ENCODE measurements at regions of chr18 and their contacts with region 1.

Region 1: GRCh38 chr18:74353169-74353775 is 37.6 kb downstream of the C18orf63 start:
- DNase-seq: peak; percentile 27 to 83 (median 57)
- ATAC-seq: peak; percentile 92
- H3K4me3 ChIP-seq: no peak overlapping the region
- H3K4me3 Mint-ChIP-seq: no peak overlapping the region
- H3K27ac ChIP-seq: no peak overlapping the region
- H3K27ac Mint-ChIP-seq: no peak overlapping the region
- H3K4me1 ChIP-seq: peaks cover 4% of the 10 kb centered on the region
- H3K4me1 Mint-ChIP-seq: peaks cover 11% of the 10 kb centered on the region
- H3K27me3 ChIP-seq: no peaks in the 10 kb centered on the region
- H3K27me3 Mint-ChIP-seq: no peaks in the 10 kb centered on the region
- CTCF ChIP-seq: peak; percentile 77

Region 2: GRCh38 chr18:73842795-73843394 is 510.4 kb before region 1 on chr18:
- CTCF ChIA-PET with region 1: no interaction called
- POLR2A ChIA-PET with region 1: no interaction called
- intact Hi-C with region 1: no loop called
- DNase-seq: peak in 7 of 9 experiments; percentile 7 to 56 (median 30)
- ATAC-seq: peak; percentile 49
- H3K4me3 ChIP-seq: no peak overlapping the region
- H3K4me3 Mint-ChIP-seq: peak overlapping the region; percentile 78
- H3K27ac ChIP-seq: no peak overlapping the region
- H3K27ac Mint-ChIP-seq: no peak overlapping the region
- H3K4me1 ChIP-seq: no peaks in the 10 kb centered on the region
- H3K4me1 Mint-ChIP-seq: peaks cover 7% of the 10 kb centered on the region
- H3K27me3 ChIP-seq: no peaks in the 10 kb centered on the region
- H3K27me3 Mint-ChIP-seq: peaks cover 2% of the 10 kb centered on the region
- CTCF ChIP-seq: peak; percentile 94

Region 3: DNA sequence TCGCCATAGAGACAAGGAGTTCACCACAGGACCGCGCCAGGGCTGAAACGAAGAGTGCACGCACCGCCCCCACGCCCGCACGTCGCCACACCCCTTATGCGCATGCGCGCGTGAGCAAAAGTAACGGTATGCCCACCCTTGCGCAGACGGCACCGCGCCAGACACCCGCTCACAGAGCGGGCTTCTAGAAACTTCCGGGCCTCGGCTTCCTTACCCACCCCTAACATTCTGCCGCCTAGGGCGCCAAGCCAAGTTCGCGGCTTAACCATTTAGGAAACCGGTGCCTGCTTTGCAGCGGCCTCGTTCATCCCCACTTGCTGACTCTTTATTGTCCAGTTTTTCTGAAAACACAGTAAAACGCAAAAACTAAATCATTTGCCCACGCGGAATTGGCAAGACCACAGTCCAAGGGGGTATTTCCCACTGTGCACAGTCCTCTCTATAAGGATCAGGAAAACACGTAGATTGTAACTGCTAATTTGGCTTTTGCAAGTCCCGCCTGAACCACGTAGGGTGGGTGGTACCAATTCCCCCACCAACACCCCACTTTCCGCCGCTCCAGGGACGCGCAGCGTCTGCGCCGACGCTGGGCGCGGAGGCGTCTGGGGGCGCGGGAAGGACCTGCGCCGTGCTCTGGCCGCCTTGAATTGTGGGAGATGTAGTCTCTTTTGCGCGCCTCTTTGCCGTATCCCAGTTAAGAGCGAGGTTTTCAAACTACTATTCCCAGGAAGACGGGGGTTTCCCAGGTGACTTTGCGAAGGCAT is 205.3 kb before region 1 on chr18 and contains the starts of genes FBXO15 and TIMM21:
- CTCF ChIA-PET with region 1: no interaction called
- POLR2A ChIA-PET with region 1: no interaction called
- intact Hi-C with region 1: loop called in 1 of 2 experiments (anchors 5 kb)
- DNase-seq: peak; percentile 89 to 99 (median 96)
- ATAC-seq: peak; percentile 83
- H3K4me3 ChIP-seq: peak within 1 kb of the TSS; percentile 84 to 91
- H3K4me3 Mint-ChIP-seq: peak within 1 kb of the TSS; percentile 90
- H3K27ac ChIP-seq: peak within 1 kb of the TSS; percentile 92 to 99
- H3K27ac Mint-ChIP-seq: peak within 1 kb of the TSS; percentile 92
- H3K4me1 ChIP-seq: peaks cover 21% of the 10 kb centered on the region
- H3K4me1 Mint-ChIP-seq: peaks cover 53% of the 10 kb centered on the region
- H3K27me3 ChIP-seq: no peaks in the 10 kb centered on the region
- H3K27me3 Mint-ChIP-seq: no peaks in the 10 kb centered on the region
- CTCF ChIP-seq: no peak
- total RNA-seq, gene FBXO15: 1.0 to 1.3 TPM
- total RNA-seq, gene TIMM21: 20.2 to 20.8 TPM

Region 4: DNA sequence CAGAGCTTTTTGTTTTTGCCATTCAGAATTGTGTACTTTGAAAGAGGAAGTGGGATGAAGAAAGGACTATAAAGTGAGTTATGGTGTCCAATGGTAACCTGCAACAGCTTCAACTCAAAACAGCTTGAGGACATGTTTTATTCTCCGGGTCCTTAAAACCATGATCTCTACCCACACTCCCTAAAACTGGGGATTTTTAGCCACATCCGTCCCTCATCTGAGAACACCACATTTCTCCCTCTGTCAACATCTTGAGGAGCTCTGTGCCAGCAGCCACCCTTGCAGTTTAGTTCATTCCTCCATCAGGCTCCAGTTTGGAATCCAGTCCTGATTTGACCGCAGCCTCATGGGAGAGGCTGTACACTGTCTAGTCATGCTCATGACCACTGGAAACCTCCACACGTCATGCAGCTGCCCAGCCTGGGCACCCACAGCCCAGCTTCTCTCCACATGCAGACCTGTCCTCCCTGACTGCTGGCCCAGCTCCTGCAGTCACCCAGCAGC is 25.0 kb after region 1 on chr18:
- CTCF ChIA-PET with region 1: interaction called, 24 read pairs
- POLR2A ChIA-PET with region 1: interaction called, 7 read pairs
- intact Hi-C with region 1: loop called in 1 of 2 experiments (anchors 1 kb)
- DNase-seq: peak in 5 of 9 experiments; percentile 18 to 80 (median 51)
- ATAC-seq: peak; percentile 35
- H3K4me3 ChIP-seq: peak overlapping the region in 1 of 2 experiments; percentile 41
- H3K4me3 Mint-ChIP-seq: peak overlapping the region; percentile 64
- H3K27ac ChIP-seq: peak overlapping the region in 1 of 2 experiments; percentile 56
- H3K27ac Mint-ChIP-seq: peak overlapping the region; percentile 88
- H3K4me1 ChIP-seq: peaks cover 52% of the 10 kb centered on the region
- H3K4me1 Mint-ChIP-seq: peaks cover 58% of the 10 kb centered on the region
- H3K27me3 ChIP-seq: no peaks in the 10 kb centered on the region
- H3K27me3 Mint-ChIP-seq: no peaks in the 10 kb centered on the region
- CTCF ChIP-seq: no peak

Region 5: DNA sequence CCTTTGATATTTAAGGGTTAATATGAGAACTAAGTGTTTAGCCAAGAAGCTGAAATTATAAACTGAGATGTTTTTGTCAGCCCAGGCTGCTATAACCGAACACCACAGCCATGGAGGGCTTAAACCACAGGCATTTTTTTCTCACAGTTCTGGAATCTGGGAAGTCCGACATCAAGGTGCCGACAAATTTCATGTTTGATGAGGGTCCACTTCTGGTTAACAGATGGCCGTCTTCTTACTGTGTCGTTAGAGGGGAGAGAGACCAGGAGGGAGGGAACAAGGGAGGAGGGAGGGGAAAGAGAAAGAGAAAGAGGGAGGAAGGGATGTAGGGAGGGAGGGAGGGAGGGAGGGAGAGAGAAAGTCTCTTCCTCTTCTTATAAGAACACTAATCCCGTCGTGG is 136.4 kb after region 1 on chr18:
- CTCF ChIA-PET with region 1: interaction called, 340 read pairs
- POLR2A ChIA-PET with region 1: interaction called, 33 read pairs
- intact Hi-C with region 1: loop called (anchors 1 kb)
- DNase-seq: no peak
- ATAC-seq: no peak
- H3K4me3 ChIP-seq: no peak overlapping the region
- H3K4me3 Mint-ChIP-seq: no peak overlapping the region
- H3K27ac ChIP-seq: no peak overlapping the region
- H3K27ac Mint-ChIP-seq: no peak overlapping the region
- H3K4me1 ChIP-seq: peaks cover 11% of the 10 kb centered on the region
- H3K4me1 Mint-ChIP-seq: peaks cover 20% of the 10 kb centered on the region
- H3K27me3 ChIP-seq: no peaks in the 10 kb centered on the region
- H3K27me3 Mint-ChIP-seq: no peaks in the 10 kb centered on the region
- CTCF ChIP-seq: no peak

Region 6: DNA sequence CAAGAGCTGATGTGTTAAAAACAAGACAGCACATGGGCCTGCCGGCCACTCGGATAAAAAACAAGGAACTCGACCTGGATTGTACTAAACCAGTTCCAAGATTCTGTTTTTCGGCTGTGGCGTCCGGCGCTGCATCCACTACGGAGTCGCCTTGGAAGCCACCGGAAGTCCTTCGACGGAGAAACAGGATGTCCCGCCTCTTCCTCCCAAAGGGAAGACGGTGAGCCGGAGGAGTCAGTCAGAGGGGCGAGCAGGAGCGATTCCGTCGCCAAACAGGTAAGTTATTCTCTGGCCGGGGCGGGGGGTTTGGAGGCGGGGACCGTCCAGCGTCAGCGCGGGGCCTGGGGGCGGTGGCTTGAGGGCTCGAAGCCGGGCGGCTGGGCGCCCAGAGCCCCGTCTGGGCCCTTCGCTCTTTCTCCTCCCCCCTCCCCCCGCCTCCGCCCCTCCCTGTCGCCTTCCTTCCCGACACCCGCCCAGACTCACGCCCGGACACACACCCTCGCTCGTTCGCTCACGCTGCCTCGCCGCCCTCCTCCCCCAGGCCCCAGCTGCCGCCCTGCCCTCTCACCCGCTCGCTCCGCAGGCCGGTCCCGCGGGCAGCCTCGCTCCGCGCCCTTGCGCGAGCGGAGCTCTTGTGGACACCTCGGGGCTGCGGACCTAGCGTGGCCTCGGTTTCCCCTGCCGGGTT is 244.5 kb after region 1 on chr18 and contains the start of gene ZNF407:
- CTCF ChIA-PET with region 1: no interaction called
- POLR2A ChIA-PET with region 1: no interaction called
- intact Hi-C with region 1: loop called (anchors 5 kb)
- DNase-seq: peak; percentile 76 to 94 (median 86)
- ATAC-seq: peak; percentile 76
- H3K4me3 ChIP-seq: peak within 1 kb of the TSS; percentile 94 to 98
- H3K4me3 Mint-ChIP-seq: peak within 1 kb of the TSS; percentile 95
- H3K27ac ChIP-seq: peak within 1 kb of the TSS; percentile 94 to 98
- H3K27ac Mint-ChIP-seq: peak within 1 kb of the TSS; percentile 99
- H3K4me1 ChIP-seq: peaks cover 25% of the 10 kb centered on the region
- H3K4me1 Mint-ChIP-seq: peaks cover 50% of the 10 kb centered on the region
- H3K27me3 ChIP-seq: no peaks in the 10 kb centered on the region
- H3K27me3 Mint-ChIP-seq: no peaks in the 10 kb centered on the region
- CTCF ChIP-seq: no peak
- total RNA-seq, gene ZNF407: 18.4 to 18.5 TPM

Measured in CD8-positive, alpha-beta T cell (primary cell).